ENCODE measurements at regions of chr16 and their contacts with region 1.

Region 1: DNA sequence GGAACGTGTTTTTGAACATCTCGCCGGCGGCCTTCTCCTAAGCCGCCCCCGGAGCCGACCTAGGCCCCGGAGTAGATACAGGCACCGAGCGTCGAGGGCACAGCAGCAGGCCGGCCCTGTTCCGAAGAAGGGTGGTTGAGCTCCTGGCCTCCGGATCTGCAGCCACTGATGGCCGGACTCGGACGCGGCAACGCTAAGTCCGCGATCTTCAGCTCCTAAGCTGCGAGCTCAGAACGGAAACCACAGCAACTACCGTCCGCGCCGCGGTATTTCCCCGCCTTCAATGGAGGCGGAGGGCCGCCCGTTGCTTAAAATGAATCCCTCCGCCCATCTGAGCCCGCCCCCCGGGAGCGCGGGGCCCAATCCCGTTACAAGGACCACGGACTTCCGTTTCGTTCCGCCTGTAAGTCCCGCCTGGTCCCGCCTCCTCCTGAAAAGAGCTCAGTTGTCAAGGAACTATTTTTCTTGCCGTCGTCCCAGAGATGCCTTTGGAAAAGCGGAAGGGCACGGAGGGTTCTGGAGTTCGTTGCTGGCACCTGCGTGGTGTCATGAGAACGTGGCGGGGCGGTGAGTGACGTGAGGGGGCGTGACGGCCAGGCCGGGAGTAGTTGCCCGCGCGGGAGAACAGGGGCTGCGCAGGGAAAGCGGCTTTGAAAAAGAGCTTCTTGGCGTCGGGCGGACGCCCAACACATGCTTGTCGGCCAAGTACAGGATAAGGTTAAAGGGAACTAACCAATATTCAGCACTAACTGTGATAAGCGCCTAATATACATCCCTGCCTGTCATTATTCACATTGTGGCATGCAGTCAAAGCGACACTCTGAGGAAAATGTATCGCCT is at the start of gene CFAP20:
- DNase-seq: peak; percentile 98
- ATAC-seq: peak; percentile 94
- H3K4me3 Mint-ChIP-seq: peak within 1 kb of the TSS; percentile 75
- H3K27ac Mint-ChIP-seq: peak within 1 kb of the TSS; percentile 84
- H3K4me1 Mint-ChIP-seq: peaks cover 38% of the 10 kb centered on the region
- H3K27me3 Mint-ChIP-seq: no peaks in the 10 kb centered on the region
- total RNA-seq, gene CFAP20: 45.9 to 48.7 TPM

Region 2: GRCh38 chr16:57300387-57301125 is 828.8 kb before region 1 on chr16:
- CTCF ChIA-PET with region 1: no interaction called
- POLR2A ChIA-PET with region 1: no interaction called
- intact Hi-C with region 1: loop called in 1 of 2 experiments (anchors 1 kb)
- DNase-seq: peak; percentile 99
- ATAC-seq: peak; percentile 89
- H3K4me3 Mint-ChIP-seq: no peak overlapping the region
- H3K27ac Mint-ChIP-seq: no peak overlapping the region
- H3K4me1 Mint-ChIP-seq: peaks cover 3% of the 10 kb centered on the region
- H3K27me3 Mint-ChIP-seq: no peaks in the 10 kb centered on the region

Region 3: GRCh38 chr16:57734925-57735754 is 394.2 kb before region 1 on chr16:
- CTCF ChIA-PET with region 1: no interaction called
- POLR2A ChIA-PET with region 1: no interaction called
- intact Hi-C with region 1: loop called in 1 of 2 experiments (anchors 1 kb)
- DNase-seq: peak; percentile 98
- ATAC-seq: peak; percentile 95
- H3K4me3 Mint-ChIP-seq: peak overlapping the region; percentile 92
- H3K27ac Mint-ChIP-seq: peak overlapping the region; percentile 96
- H3K4me1 Mint-ChIP-seq: peaks cover 22% of the 10 kb centered on the region
- H3K27me3 Mint-ChIP-seq: no peaks in the 10 kb centered on the region

Region 4: GRCh38 chr16:57863434-57864160 is 265.7 kb before region 1 on chr16:
- CTCF ChIA-PET with region 1: no interaction called
- POLR2A ChIA-PET with region 1: no interaction called
- intact Hi-C with region 1: no loop called
- DNase-seq: peak; percentile 16
- ATAC-seq: no peak
- H3K4me3 Mint-ChIP-seq: no peak overlapping the region
- H3K27ac Mint-ChIP-seq: no peak overlapping the region
- H3K4me1 Mint-ChIP-seq: no peaks in the 10 kb centered on the region
- H3K27me3 Mint-ChIP-seq: peaks cover 13% of the 10 kb centered on the region

Region 5: DNA sequence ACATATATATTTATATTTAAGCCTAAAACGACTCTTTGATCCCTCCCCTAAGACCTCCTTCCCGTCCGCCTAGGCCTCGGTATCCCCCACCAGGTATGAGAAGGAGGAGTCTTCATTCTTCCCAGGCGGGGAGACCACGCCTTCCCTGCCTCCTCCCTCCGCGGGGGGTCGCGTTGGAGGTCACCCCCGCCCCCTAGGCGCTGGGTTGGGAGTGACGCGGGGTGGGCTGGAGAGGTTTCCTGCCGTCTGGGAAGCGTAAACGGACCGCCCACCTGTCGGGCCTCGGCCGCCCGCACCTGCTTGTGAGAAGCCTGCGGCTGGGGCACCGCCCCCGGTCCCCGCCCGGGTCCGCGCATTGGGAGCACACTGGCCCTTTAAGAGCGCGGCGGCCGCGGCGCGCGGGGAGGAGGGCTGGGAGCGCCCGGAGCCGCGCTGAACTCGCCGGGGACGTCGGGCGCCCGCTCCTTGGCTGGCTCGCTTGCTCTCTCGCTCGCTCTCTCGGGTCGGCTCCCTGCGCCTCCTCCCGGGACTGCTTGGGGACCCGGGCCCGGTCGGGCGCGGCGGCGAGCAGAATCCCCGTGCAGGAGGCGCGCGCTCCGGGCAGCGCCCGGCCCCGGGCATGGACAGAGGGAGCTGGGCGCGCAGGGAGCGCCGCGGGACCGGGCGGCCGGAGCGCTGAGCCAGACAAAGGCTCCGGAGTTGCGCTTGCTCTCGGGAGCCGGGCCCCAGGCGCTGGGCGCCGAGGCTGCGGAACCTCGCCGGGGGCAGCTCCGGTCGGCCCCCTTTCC is 103.8 kb before region 1 on chr16 and contains the start of gene MMP15:
- CTCF ChIA-PET with region 1: interaction called, 3 read pairs
- POLR2A ChIA-PET with region 1: interaction called, 4 read pairs
- intact Hi-C with region 1: loop called (anchors 1 kb)
- DNase-seq: peak; percentile 77
- ATAC-seq: peak; percentile 77
- H3K4me3 Mint-ChIP-seq: peak within 1 kb of the TSS; percentile 72
- H3K27ac Mint-ChIP-seq: peak within 1 kb of the TSS; percentile 75
- H3K4me1 Mint-ChIP-seq: peaks cover 10% of the 10 kb centered on the region
- H3K27me3 Mint-ChIP-seq: peaks cover 5% of the 10 kb centered on the region
- total RNA-seq, gene MMP15: 0.19 to 0.43 TPM

Region 6: DNA sequence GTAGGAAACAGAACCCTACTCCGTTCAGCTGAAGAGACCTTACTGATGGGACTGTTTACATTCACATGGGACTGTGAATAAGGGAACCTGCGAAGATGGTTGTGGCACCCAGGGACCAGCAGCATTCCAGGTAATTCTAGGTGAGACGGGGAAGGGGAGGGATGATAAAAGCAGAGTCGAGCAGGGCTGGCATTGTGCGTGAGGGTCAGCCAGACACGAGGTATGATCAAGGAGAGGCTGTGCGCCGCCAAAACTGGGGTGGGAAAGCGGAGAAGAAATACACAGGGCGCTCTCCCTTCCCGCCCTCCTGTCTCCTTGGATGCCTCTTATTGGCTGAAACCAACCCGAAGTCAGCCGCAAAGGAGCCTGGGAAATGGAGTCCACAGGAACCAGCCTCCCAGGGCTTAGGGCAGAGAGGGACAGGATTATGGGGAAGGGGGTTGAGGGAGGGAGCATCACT is 106.9 kb after region 1 on chr16:
- CTCF ChIA-PET with region 1: no interaction called
- POLR2A ChIA-PET with region 1: no interaction called
- intact Hi-C with region 1: loop called in 1 of 2 experiments (anchors 1 kb)
- DNase-seq: peak; percentile 82
- ATAC-seq: peak; percentile 99
- H3K4me3 Mint-ChIP-seq: peak overlapping the region; percentile 69
- H3K27ac Mint-ChIP-seq: no peak overlapping the region
- H3K4me1 Mint-ChIP-seq: peaks cover 8% of the 10 kb centered on the region
- H3K27me3 Mint-ChIP-seq: peaks cover 20% of the 10 kb centered on the region

Region 7: DNA sequence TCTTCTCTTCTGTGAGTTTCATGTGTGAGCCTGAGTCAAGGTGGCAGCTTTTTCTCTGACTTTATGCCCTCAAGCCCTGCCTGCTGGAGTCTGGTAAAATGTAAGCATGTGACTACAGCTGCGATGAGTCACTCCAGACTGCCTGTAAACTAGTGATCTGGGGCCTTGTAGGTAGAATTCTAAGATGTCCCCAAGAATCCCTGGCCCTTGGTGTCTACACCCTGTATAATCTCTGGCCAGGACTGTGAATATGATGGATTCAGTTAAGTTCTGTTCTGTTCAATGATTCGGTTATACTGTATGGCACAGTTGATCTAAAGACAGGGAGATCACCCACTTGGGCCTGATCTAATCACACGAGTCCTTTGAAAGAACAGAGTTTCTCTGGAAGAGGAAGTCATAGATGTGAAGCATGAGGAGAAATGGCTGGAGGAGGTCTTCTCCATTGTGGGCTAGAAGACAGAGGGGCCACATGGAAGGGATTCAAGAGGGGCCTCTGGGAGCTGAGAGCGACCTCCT is 135.7 kb after region 1 on chr16:
- CTCF ChIA-PET with region 1: no interaction called
- POLR2A ChIA-PET with region 1: no interaction called
- intact Hi-C with region 1: no loop called
- DNase-seq: peak; percentile 55
- ATAC-seq: peak; percentile 98
- H3K4me3 Mint-ChIP-seq: no peak overlapping the region
- H3K27ac Mint-ChIP-seq: peak overlapping the region; percentile 77
- H3K4me1 Mint-ChIP-seq: peaks cover 7% of the 10 kb centered on the region
- H3K27me3 Mint-ChIP-seq: no peaks in the 10 kb centered on the region

Region 8: DNA sequence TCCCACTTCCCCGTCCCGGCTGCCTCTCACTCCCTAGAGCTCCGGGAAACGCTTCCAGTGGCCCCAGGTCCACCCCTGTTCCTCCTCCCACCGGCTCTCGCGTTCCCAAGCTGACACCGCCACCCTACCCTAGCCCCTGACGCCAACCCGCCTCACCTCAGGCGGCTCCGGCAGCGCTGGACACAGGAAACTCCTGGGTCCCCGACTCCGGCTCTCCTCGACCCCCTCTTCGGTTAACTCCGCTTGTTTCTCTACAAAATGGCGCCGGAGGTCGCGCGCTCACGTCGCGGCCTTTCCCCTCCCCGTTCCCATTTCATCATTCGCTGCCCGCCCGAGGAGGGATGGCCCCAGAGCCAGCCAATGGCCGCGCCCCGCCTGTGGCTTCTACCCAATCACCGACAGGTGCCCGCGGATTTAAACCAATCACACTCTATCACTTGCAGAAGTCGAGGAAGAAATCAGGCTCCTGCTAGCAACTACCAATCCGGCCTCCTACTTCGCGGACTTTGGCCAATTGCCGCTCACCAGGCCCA is 500.3 kb after region 1 on chr16 and contains the start of gene CNOT1:
- CTCF ChIA-PET with region 1: no interaction called
- POLR2A ChIA-PET with region 1: no interaction called
- intact Hi-C with region 1: loop called in 1 of 2 experiments (anchors 1 kb)
- DNase-seq: peak; percentile 99
- ATAC-seq: peak; percentile 89
- H3K4me3 Mint-ChIP-seq: peak within 1 kb of the TSS; percentile 100
- H3K27ac Mint-ChIP-seq: peak within 1 kb of the TSS; percentile 100
- H3K4me1 Mint-ChIP-seq: peaks cover 27% of the 10 kb centered on the region
- H3K27me3 Mint-ChIP-seq: no peaks in the 10 kb centered on the region
- total RNA-seq, gene CNOT1: 265 to 348 TPM

Measured in activated CD4-positive, alpha-beta T cell treated with anti-CD3 and anti-CD28 coated beads for 36 hours (primary cell).